ENCODE measurements at regions of chr1 and their contacts with region 1.

Region 1: DNA sequence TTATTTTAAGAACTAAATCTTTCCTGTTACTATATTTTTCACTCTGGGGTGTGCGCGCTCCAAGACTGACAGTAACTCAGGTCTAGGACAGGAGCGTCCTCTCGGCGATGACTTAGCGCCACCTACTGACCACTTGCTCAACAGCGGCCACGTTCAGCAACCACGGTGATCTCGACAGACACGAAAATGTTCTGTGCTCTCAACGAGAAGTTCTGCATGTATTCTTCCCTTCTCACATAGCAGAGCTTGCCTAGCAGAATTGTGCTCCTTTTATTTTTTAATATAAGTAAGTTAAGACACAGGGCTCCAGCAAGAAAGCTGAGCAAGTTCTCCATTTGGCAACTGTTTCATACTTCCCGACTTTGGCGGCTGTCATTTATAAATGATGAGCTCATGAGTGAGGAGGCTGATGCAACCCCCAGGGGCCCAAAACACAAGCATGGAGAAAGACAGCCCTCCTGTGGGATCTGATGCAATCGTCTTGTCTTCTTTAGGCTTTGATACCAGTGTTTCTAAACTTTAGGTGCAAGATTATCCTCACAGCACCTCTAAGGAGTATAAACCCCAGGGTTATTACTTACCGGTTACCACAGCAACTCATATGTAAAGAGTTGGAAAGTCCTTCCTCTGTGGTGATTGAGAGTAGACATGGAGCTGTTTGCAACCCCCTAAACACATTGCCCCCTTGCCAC is 92.6 kb downstream of the HHIPL2 start:
- DNase-seq: peak; percentile 58 to 88 (median 82)
- ATAC-seq: peak; percentile 97
- H3K4me3 ChIP-seq: no peak overlapping the region
- H3K4me3 Mint-ChIP-seq: peak overlapping the region in 9 of 10 donors; percentile 0 to 75 (median 58)
- H3K27ac ChIP-seq: no peak overlapping the region
- H3K27ac Mint-ChIP-seq: peak overlapping the region; percentile 26 to 84 (median 65)
- H3K4me1 ChIP-seq: peaks cover 8 to 9% of the 10 kb centered on the region in 2 donors
- H3K4me1 Mint-ChIP-seq: peaks cover 8 to 31% (median 15%) of the 10 kb centered on the region in 7 donors
- H3K27me3 ChIP-seq: no peaks in the 10 kb centered on the region
- H3K27me3 Mint-ChIP-seq: peaks cover 0 to 4% (median 0%) of the 10 kb centered on the region in 5 donors

Region 2: DNA sequence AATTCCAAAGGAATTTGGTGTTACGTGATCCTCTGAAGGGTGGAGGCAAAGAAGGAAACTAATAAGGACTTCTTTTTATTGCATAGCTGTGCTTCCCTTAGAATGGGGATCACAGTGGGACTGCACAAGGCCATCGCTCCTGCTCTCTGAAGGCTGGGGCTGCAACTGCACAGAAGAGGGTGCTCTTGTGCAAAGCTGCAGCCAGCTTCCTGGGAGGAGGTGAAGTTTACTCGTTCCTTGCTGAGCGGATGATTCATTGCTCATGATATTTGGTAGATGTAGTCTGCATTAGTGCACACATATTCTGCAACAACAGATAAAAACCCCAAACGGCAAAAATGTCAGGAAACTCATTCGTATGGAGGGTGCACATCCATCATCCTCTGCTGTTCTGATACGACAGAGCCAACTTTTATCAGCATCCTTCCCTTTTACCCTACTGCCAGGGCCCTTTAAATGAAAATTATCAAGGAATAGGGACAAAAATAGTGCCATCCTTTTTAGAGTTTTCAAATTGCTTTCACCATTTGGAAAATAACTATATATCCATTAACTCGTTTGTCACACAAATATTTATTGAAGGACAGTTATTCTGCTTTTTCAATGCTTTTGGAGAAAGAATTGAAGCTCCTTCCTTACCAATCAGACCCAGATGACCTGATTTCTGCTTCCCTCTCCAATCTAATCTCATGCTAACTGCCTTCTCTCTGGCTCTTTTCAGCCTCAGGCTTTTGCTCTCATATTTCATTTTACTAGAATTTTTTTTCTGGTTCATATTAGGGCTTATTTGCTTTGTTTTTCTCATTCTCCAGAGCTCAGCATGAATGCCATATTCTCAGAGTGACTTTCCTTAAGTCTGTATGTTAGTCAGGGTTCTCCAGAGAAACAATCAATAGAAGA is 977.0 kb before region 1 on chr1:
- CTCF ChIA-PET with region 1: interaction called, 10 read pairs
- POLR2A ChIA-PET with region 1: no interaction called
- intact Hi-C with region 1: loop called (anchors 1 to 2 kb)
- DNase-seq: peak; percentile 7 to 46 (median 31)
- ATAC-seq: peak; percentile 82
- H3K4me3 ChIP-seq: no peak overlapping the region
- H3K4me3 Mint-ChIP-seq: no peak overlapping the region
- H3K27ac ChIP-seq: no peak overlapping the region
- H3K27ac Mint-ChIP-seq: no peak overlapping the region
- H3K4me1 ChIP-seq: no peaks in the 10 kb centered on the region
- H3K4me1 Mint-ChIP-seq: peaks cover 0 to 5% (median 0%) of the 10 kb centered on the region in 7 donors
- H3K27me3 ChIP-seq: no peaks in the 10 kb centered on the region
- H3K27me3 Mint-ChIP-seq: peaks cover 0 to 15% (median 4%) of the 10 kb centered on the region in 5 donors

Region 3: DNA sequence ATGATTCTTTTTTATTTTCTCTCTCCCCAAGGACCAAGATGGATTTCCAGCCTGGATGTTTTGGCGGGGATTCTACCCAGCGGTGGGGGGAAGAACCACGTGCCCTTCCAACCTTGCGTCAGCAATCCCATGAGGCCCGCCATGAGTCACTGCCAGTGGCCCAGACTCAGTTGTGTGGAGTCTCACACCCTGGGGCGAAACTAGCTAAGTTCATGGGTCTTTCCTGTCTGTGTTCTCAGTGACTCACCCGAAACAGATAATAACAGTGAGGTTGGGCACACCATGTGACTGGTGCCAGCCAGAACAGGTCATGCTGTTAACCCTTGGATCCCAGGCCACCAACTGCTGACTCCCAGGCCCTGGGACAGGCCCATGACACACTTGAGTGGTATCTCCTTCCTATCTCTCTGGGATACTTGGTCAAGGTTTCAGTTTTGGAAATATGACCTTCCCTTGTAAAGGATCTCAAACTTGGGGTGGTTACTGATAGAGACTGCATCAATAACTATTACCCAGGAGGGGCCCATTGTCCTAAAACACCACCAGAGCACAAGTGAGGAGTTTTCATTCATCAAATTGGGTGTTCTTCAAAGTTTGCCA is 615.4 kb before region 1 on chr1:
- CTCF ChIA-PET with region 1: interaction called, 5 read pairs
- POLR2A ChIA-PET with region 1: no interaction called
- intact Hi-C with region 1: loop called in 1 of 2 experiments (anchors 10 kb)
- DNase-seq: peak in 1 of 9 donors; percentile 55
- ATAC-seq: peak; percentile 89
- H3K4me3 ChIP-seq: no peak overlapping the region
- H3K4me3 Mint-ChIP-seq: peak overlapping the region in 1 of 10 donors; percentile 32
- H3K27ac ChIP-seq: no peak overlapping the region
- H3K27ac Mint-ChIP-seq: peak overlapping the region in 3 of 9 donors; percentile 38 to 49 (median 46)
- H3K4me1 ChIP-seq: peaks cover 0 to 17% of the 10 kb centered on the region in 2 donors
- H3K4me1 Mint-ChIP-seq: peaks cover 9 to 58% (median 13%) of the 10 kb centered on the region in 7 donors
- H3K27me3 ChIP-seq: no peaks in the 10 kb centered on the region
- H3K27me3 Mint-ChIP-seq: peaks cover 0 to 9% (median 4%) of the 10 kb centered on the region in 5 donors

Region 4: DNA sequence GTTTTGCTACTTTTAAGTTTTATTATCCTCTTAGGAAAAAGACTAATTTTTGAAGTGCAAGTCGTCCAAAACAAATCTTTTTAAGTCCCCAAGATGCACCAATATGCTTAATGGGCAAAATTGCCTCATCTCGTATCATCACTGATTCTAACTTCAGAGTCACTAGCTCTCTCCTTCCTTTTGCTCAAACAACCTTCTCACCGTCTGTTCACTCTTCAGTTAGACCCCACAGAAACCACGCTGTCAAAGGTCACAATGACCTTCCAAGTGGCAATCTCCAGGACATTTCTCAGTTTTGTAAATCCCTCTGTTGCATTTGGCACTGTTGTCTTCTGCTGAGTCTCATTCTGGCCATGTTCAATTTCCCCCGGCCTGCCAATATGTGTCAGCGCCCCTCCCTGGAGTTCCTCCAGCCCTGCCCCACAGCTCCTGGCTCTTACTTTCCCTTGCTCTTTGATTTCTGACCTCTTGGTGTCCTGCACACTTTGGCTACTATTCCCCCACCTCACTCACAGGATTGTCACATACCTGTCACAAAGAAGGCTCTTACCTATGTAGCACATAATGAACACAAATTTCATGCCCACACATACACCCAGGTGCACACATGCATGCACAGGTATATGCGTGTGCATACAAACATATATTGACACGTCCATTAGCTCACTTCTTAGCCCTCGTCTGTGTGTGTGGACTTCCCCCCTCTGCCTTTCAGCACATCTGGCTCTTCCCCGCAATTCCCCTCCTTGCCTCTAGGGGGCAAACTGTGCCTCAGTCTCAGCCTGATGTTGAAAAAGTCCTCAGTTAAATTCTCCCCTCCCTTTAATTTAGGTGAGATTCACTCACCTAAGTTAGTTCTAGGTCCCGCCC is 359.5 kb before region 1 on chr1:
- CTCF ChIA-PET with region 1: interaction called, 99 read pairs
- POLR2A ChIA-PET with region 1: interaction called, 7 read pairs
- intact Hi-C with region 1: loop called (anchors 1 kb)
- DNase-seq: peak; percentile 31 to 71 (median 58)
- ATAC-seq: peak; percentile 85
- H3K4me3 ChIP-seq: no peak overlapping the region
- H3K4me3 Mint-ChIP-seq: no peak overlapping the region
- H3K27ac ChIP-seq: no peak overlapping the region
- H3K27ac Mint-ChIP-seq: no peak overlapping the region
- H3K4me1 ChIP-seq: no peaks in the 10 kb centered on the region
- H3K4me1 Mint-ChIP-seq: no peaks in the 10 kb centered on the region
- H3K27me3 ChIP-seq: no peaks in the 10 kb centered on the region
- H3K27me3 Mint-ChIP-seq: peaks cover 0 to 5% (median 0%) of the 10 kb centered on the region in 5 donors

Region 5: DNA sequence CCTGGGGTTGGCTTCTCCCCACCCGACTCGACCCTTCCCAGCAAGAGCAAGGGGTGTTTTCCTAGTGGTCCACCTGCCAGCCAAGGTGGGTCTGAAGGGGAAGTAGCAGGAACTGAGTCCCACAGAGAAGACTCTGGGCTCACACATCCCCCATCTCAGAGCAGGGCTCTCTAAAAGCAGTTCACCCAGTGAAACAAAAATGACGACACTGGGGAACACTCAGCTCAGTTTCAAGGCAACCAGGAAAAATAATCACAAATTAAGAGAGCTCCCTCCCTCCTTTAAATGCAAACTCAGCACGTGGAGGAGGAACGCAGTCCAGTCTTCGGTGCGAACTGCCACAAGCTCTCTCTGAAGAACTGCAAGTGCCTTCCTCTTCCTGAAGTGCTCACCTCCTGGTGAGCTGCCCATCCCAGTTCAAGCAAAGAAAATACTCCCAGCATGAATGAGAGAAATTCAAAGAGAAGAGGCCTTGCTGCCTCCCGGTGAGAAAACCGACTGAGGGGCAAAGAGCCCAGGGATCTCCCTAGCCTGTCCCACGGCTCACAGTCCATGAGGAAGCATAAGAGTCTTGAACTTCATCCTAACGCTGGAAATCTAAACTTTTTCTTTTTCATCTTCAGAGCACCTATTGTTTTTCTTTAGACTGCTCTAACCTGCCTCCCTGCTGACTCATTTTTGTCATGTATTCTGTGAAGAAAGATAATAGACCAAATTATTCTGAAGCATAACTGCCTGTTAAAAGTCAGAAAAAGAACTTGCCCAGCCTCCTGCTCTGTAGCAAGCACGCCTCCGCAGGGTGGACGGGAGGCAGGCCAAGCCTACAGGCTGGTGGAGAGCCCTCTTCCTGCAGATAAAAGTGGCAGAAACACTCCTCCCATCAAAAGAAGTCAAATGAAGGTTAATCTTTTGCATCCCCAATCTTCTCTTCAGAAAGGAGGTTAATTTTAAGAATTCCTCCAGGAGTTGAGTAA is 188.8 kb before region 1 on chr1:
- CTCF ChIA-PET with region 1: interaction called, 3 read pairs
- POLR2A ChIA-PET with region 1: no interaction called
- intact Hi-C with region 1: loop called in 1 of 2 experiments (anchors 10 kb)
- DNase-seq: no peak
- ATAC-seq: no peak
- H3K4me3 ChIP-seq: no peak overlapping the region
- H3K4me3 Mint-ChIP-seq: no peak overlapping the region
- H3K27ac ChIP-seq: no peak overlapping the region
- H3K27ac Mint-ChIP-seq: peak overlapping the region in 4 of 9 donors; percentile 49 to 73 (median 66)
- H3K4me1 ChIP-seq: peaks cover 0 to 18% of the 10 kb centered on the region in 2 donors
- H3K4me1 Mint-ChIP-seq: peaks cover 0 to 19% (median 9%) of the 10 kb centered on the region in 7 donors
- H3K27me3 ChIP-seq: no peaks in the 10 kb centered on the region
- H3K27me3 Mint-ChIP-seq: no peaks in the 10 kb centered on the region

Region 6: DNA sequence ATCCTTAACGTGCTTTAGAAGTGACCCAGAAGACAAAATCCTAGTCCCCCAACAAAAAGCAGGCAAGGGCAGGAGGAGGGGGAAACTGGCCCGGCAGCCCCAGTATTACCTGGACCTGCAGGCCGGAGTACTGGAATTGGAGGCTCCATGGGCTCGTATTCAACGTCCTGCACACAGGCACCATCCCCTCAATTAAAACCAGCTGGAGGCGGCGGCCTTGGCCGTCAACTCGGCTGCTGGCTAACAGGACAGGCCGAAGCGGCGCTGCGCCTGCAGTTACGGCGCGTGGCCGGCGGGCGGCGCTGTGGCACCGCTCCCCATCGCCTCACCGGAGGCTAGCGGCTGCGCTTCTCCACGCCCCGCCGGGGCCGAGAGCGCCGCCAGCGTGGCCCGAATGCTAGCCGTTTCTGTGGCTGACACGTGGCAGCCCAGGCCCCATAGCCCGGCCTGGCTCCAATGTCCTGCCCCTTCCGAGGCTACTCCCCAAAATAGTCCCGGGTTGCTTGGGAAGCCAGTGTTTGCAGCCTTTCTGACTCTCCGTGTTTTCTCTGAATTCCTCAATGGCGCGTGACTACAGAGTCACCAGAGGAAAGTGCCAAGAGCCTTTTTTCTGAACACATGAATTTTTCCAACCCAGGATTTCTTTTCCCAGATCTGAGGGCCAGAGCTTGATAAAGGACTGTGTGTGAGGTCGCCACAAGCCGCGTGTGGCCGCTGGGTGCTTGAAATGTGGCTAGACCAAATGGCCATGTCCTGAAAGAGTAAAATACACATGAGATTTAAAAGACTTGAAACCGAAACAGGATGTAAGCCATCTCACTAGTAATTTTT is 10.1 kb after region 1 on chr1:
- CTCF ChIA-PET with region 1: interaction called, 11 read pairs
- POLR2A ChIA-PET with region 1: interaction called, 3 read pairs
- intact Hi-C with region 1: no loop called
- DNase-seq: peak; percentile 57 to 89 (median 84)
- ATAC-seq: peak; percentile 99
- H3K4me3 ChIP-seq: peak overlapping the region; percentile 86
- H3K4me3 Mint-ChIP-seq: peak overlapping the region; percentile 79 to 92 (median 86)
- H3K27ac ChIP-seq: peak overlapping the region; percentile 64
- H3K27ac Mint-ChIP-seq: peak overlapping the region; percentile 80 to 96 (median 90)
- H3K4me1 ChIP-seq: peaks cover 5 to 6% of the 10 kb centered on the region in 2 donors
- H3K4me1 Mint-ChIP-seq: peaks cover 11 to 25% (median 13%) of the 10 kb centered on the region in 7 donors
- H3K27me3 ChIP-seq: no peaks in the 10 kb centered on the region
- H3K27me3 Mint-ChIP-seq: peaks cover 0 to 18% (median 0%) of the 10 kb centered on the region in 5 donors

Measured in naive thymus-derived CD4-positive, alpha-beta T cell (primary cell).